ENCODE measurements at regions of chr6 and their contacts with region 1.

Region 1: DNA sequence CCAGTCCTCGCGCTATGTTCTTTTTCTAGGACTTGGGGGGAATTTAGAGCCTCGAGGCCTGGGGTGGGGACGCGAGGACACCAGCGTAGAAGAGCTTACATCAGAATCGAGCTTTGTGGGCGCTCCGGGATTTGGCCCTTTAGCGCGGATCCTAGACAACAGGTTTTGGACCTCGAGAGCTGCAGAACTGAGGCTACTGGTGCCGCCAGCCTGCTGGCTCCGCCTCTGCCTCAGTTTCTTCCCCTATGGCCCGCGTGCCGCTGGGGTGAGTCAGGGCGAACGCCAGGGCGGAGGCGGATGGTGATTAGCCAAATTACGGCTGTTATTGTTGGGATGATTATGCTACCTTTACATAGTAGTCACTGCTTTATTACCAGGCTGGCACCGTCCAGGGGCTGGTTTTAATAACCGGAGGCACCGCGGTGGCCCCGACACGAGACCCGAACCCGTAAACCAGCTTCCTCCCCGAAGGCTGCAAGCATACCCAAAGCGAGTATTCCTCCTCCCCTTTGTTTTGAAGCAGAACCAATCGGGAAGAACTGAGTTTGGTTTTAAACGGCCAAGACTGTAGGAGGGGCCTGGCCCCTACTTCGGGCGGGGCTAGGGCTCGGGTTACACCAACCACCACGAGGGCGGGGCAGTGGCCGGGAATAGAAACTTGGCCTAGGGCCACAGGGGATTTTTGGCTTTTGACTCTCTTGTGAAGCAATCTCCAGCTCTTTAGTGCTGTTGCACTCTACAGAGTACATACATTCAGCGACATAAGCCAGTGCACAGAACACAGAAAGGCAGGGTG is 639 bp upstream of the GTPBP2 start:
- DNase-seq: peak; percentile 97
- H3K4me3 Mint-ChIP-seq: peak overlapping the region; percentile 93
- H3K27ac Mint-ChIP-seq: peak overlapping the region; percentile 98
- H3K4me1 Mint-ChIP-seq: peaks cover 29% of the 10 kb centered on the region
- H3K27me3 Mint-ChIP-seq: no peaks in the 10 kb centered on the region

Region 2: GRCh38 chr6:43035495-43036194 is 594.1 kb before region 1 on chr6:
- CTCF ChIA-PET with region 1: no interaction called
- POLR2A ChIA-PET with region 1: no interaction called
- intact Hi-C with region 1: no loop called
- DNase-seq: no peak
- H3K4me3 Mint-ChIP-seq: no peak overlapping the region
- H3K27ac Mint-ChIP-seq: no peak overlapping the region
- H3K4me1 Mint-ChIP-seq: no peaks in the 10 kb centered on the region
- H3K27me3 Mint-ChIP-seq: no peaks in the 10 kb centered on the region

Region 3: GRCh38 chr6:43516697-43517504 is 112.8 kb before region 1 on chr6 and contains the starts of genes POLR1C and YIPF3:
- CTCF ChIA-PET with region 1: no interaction called
- POLR2A ChIA-PET with region 1: interaction called, 3 read pairs
- intact Hi-C with region 1: loop called (anchors 1 kb)
- DNase-seq: peak; percentile 99
- H3K4me3 Mint-ChIP-seq: no peak within 1 kb of the TSS
- H3K27ac Mint-ChIP-seq: no peak within 1 kb of the TSS
- H3K4me1 Mint-ChIP-seq: peaks cover 25% of the 10 kb centered on the region
- H3K27me3 Mint-ChIP-seq: no peaks in the 10 kb centered on the region
- total RNA-seq, gene POLR1C: 46.8 to 49.5 TPM
- total RNA-seq, gene YIPF3: 38.3 to 39.3 TPM

Region 4: GRCh38 chr6:43570876-43571441 is 58.7 kb before region 1 on chr6:
- CTCF ChIA-PET with region 1: interaction called, 6 read pairs
- POLR2A ChIA-PET with region 1: interaction called, 14 read pairs
- intact Hi-C with region 1: loop called (anchors 1 kb)
- DNase-seq: no peak
- H3K4me3 Mint-ChIP-seq: no peak overlapping the region
- H3K27ac Mint-ChIP-seq: peak overlapping the region; percentile 90
- H3K4me1 Mint-ChIP-seq: peaks cover 35% of the 10 kb centered on the region
- H3K27me3 Mint-ChIP-seq: no peaks in the 10 kb centered on the region

Region 5: DNA sequence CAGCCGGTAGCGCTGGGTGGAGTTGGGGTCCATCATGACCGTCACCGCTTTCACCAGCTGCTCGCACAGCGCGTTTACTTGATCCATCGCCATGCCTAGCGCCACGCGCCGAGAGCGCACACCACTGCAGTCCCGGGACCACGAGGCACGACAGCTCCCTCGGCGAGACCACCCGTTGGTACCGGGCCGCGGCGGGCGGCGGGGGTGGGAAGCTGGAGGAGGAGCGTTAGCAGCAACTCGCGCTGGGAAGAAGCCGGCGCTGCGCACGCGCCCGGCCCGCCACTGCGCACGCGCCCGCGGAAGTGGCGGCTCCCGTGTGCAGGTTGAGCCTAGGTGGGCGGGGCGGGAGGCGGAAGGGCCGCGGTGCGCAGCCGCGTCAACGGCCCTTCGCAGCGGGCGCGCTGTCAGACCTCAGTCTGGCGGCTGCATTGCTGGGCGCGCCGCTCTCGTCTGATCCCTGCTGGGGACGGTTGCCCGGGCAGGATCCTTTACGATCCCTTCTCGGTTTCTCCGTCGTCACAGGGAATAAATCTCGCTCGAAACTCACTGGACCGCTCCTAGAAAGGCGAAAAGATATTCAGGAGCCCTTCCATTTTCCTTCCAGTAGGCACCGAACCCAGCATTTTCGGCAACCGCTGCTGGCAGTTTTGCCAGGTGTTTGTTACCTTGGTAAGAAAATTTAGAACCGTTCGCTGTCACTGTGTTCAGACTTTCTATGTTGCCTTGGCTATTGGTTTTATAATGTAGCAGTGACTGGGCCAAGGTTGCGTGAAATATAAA is 53.7 kb before region 1 on chr6 and contains the starts of genes POLH and XPO5:
- CTCF ChIA-PET with region 1: interaction called, 6 read pairs
- POLR2A ChIA-PET with region 1: interaction called, 14 read pairs
- intact Hi-C with region 1: loop called (anchors 1 kb)
- DNase-seq: peak; percentile 94
- H3K4me3 Mint-ChIP-seq: peak within 1 kb of the TSS; percentile 97
- H3K27ac Mint-ChIP-seq: peak within 1 kb of the TSS; percentile 85
- H3K4me1 Mint-ChIP-seq: peaks cover 52% of the 10 kb centered on the region
- H3K27me3 Mint-ChIP-seq: no peaks in the 10 kb centered on the region
- total RNA-seq, gene POLH: 52.1 to 52.5 TPM
- total RNA-seq, gene XPO5: 83.7 to 97.9 TPM